Activated naive CD4-positive, alpha-beta T cell treated with anti-CD3 and anti-CD28 coated beads for 36 hours (primary cell): ENCODE measurements at regions of chr3 and their contacts with region 1.

Region 1: GRCh38 chr3:17995769-17996168 is 253.3 kb upstream of the TBC1D5 start:
- DNase-seq: peak; percentile 13
- H3K4me3 Mint-ChIP-seq: no peak overlapping the region
- H3K27ac Mint-ChIP-seq: no peak overlapping the region
- H3K4me1 Mint-ChIP-seq: no peaks in the 10 kb centered on the region
- H3K27me3 Mint-ChIP-seq: no peaks in the 10 kb centered on the region

Region 2: DNA sequence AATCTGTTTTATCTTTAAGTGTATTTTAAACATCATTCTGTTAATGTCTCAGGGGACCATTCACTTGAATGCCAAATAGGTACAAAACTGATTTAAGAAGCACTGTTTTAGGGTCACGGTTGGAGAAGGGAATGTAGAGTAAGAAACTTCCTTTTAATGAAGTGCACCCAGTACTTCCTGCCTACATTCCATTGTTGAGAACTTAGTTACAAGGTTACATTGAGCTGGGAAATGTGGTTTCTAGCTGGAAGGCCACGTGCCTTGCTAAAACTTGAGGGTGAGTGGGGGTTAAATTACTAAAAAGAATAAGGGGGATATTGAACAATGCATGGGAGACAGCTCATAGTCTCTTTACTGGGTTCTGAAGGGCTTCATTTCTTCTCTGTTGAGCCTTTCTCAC is 175.1 kb before region 1 on chr3:
- CTCF ChIA-PET with region 1: no interaction called
- intact Hi-C with region 1: no loop called
- DNase-seq: no peak
- H3K4me3 Mint-ChIP-seq: no peak overlapping the region
- H3K27ac Mint-ChIP-seq: no peak overlapping the region
- H3K4me1 Mint-ChIP-seq: no peaks in the 10 kb centered on the region
- H3K27me3 Mint-ChIP-seq: peaks cover 2% of the 10 kb centered on the region

Region 3: GRCh38 chr3:18207226-18207625 is 211.5 kb after region 1 on chr3:
- CTCF ChIA-PET with region 1: no interaction called
- intact Hi-C with region 1: no loop called
- DNase-seq: peak; percentile 26
- H3K4me3 Mint-ChIP-seq: no peak overlapping the region
- H3K27ac Mint-ChIP-seq: no peak overlapping the region
- H3K4me1 Mint-ChIP-seq: peaks cover 9% of the 10 kb centered on the region
- H3K27me3 Mint-ChIP-seq: peaks cover 2% of the 10 kb centered on the region

Region 4: GRCh38 chr3:18295171-18295920 is 299.6 kb after region 1 on chr3:
- CTCF ChIA-PET with region 1: no interaction called
- intact Hi-C with region 1: loop called (anchors 10 kb)
- DNase-seq: peak; percentile 53
- H3K4me3 Mint-ChIP-seq: no peak overlapping the region
- H3K27ac Mint-ChIP-seq: no peak overlapping the region
- H3K4me1 Mint-ChIP-seq: no peaks in the 10 kb centered on the region
- H3K27me3 Mint-ChIP-seq: no peaks in the 10 kb centered on the region

Region 5: DNA sequence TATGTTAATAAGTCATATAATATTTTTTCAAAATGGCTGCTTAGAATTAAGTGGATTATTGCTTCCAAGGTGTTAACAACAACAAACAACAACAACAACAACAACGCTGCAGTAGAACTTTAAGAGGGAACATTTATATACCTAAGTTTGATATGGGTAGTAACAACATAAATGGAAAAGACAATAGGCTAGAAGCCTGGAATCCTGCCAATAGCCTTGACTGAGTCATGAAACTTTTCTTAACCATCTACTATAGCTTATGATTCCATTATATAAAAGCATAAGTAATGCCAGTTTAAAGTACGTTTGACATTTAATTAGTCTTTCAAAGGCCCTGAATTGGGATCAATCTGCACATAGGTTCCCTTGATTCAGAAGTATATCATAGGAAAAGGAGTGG is 398.1 kb after region 1 on chr3:
- CTCF ChIA-PET with region 1: no interaction called
- intact Hi-C with region 1: no loop called
- DNase-seq: no peak
- H3K4me3 Mint-ChIP-seq: peak overlapping the region; percentile 41
- H3K27ac Mint-ChIP-seq: peak overlapping the region; percentile 73
- H3K4me1 Mint-ChIP-seq: peaks cover 84% of the 10 kb centered on the region
- H3K27me3 Mint-ChIP-seq: no peaks in the 10 kb centered on the region